ENCODE measurements at regions of chr4 and their contacts with region 1.

Region 1: DNA sequence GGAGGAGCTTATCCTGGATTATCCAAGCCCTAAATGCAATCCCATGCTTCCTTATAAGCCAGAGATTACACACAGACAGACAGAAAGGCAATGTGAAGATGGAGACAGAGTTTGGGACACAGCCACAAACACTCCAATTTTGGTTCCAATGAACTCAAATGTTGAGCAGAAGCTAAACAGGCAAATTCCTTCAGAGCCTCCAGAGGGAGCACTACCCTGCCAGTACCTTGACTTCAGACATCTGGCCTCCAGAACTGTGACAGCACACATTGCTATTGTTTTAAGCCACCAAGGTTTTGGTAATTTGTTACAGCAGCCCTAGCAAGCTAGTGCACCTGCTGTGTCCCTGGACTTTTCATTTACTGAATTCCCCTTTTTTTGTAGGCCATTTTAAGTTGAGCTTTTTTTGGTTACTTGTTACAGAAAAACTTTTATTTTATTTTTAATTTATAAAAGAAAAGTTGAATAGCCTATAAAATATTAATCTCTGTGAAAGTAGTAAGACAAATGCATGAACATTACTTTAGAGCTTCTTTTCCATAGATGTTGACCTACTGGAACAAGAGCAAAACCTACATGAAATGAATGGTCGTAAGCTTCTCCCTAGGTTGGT is 33.4 kb upstream of the SRD5A3 start:
- DNase-seq: peak; percentile 44
- H3K4me3 Mint-ChIP-seq: no peak overlapping the region
- H3K27ac Mint-ChIP-seq: no peak overlapping the region
- H3K4me1 Mint-ChIP-seq: peaks cover 5% of the 10 kb centered on the region
- H3K27me3 Mint-ChIP-seq: peaks cover 2% of the 10 kb centered on the region

Region 2: GRCh38 chr4:55103224-55103623 is 209.4 kb before region 1 on chr4:
- CTCF ChIA-PET with region 1: no interaction called
- POLR2A ChIA-PET with region 1: no interaction called
- intact Hi-C with region 1: no loop called
- DNase-seq: no peak
- H3K4me3 Mint-ChIP-seq: no peak overlapping the region
- H3K27ac Mint-ChIP-seq: no peak overlapping the region
- H3K4me1 Mint-ChIP-seq: no peaks in the 10 kb centered on the region
- H3K27me3 Mint-ChIP-seq: no peaks in the 10 kb centered on the region

Region 3: GRCh38 chr4:55175779-55176231 is 136.8 kb before region 1 on chr4:
- CTCF ChIA-PET with region 1: no interaction called
- POLR2A ChIA-PET with region 1: no interaction called
- intact Hi-C with region 1: no loop called
- DNase-seq: no peak
- H3K4me3 Mint-ChIP-seq: no peak overlapping the region
- H3K27ac Mint-ChIP-seq: no peak overlapping the region
- H3K4me1 Mint-ChIP-seq: peaks cover 3% of the 10 kb centered on the region
- H3K27me3 Mint-ChIP-seq: peaks cover 1% of the 10 kb centered on the region

Region 4: GRCh38 chr4:55635741-55636655 is 323.4 kb after region 1 on chr4 and contains the start of gene NMU:
- CTCF ChIA-PET with region 1: no interaction called
- POLR2A ChIA-PET with region 1: no interaction called
- intact Hi-C with region 1: no loop called
- DNase-seq: peak; percentile 61
- H3K4me3 Mint-ChIP-seq: peak within 1 kb of the TSS; percentile 61
- H3K27ac Mint-ChIP-seq: no peak within 1 kb of the TSS
- H3K4me1 Mint-ChIP-seq: peaks cover 14% of the 10 kb centered on the region
- H3K27me3 Mint-ChIP-seq: peaks cover 46% of the 10 kb centered on the region
- total RNA-seq, gene NMU: 0.63 TPM in 1 of 2 experiments, not detected in the other

Region 5: GRCh38 chr4:55736605-55737183 is 424.1 kb after region 1 on chr4:
- CTCF ChIA-PET with region 1: interaction called, 5 read pairs
- POLR2A ChIA-PET with region 1: no interaction called
- intact Hi-C with region 1: loop called (anchors 10 kb)
- DNase-seq: no peak
- H3K4me3 Mint-ChIP-seq: no peak overlapping the region
- H3K27ac Mint-ChIP-seq: no peak overlapping the region
- H3K4me1 Mint-ChIP-seq: no peaks in the 10 kb centered on the region
- H3K27me3 Mint-ChIP-seq: peaks cover 33% of the 10 kb centered on the region